ENCODE measurements at regions of chr5 and their contacts with region 1.

Region 1: DNA sequence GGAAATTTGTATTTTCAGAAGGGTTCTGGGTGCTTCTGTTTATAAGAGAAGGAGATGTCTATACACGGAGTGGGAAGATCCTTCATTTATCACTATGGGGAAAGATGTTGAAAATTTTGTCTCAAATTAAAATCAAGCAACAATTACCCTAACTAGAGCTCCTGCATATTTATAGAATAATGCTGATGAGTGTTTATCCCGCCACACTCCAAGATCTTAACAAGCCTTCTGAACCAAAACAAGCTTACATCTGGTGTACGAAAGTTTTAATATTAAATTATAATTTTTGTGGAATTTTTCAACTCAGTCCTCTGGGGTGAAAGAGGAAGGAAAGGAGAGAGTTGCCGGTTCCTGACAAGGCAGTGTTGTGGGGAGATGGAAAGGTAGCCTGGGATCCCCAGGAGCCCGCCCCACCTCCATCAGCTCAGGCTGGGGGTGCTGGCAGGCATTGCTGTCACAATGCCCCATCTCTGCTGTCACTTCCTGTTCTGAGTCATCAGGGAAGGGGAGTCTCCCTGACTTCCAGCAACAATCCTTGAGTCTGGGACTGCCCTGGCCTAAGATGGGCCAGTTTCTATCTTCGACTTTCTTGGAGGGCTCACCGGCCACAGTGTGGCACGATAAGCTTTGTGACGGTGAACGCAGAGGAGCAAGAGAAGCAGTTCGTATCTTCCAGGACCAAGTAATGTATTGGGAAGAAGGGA is 64.5 kb downstream of the ERAP1 start:
- DNase-seq: no peak
- H3K4me3 ChIP-seq: no peak overlapping the region
- CTCF ChIP-seq: no peak

Region 2: DNA sequence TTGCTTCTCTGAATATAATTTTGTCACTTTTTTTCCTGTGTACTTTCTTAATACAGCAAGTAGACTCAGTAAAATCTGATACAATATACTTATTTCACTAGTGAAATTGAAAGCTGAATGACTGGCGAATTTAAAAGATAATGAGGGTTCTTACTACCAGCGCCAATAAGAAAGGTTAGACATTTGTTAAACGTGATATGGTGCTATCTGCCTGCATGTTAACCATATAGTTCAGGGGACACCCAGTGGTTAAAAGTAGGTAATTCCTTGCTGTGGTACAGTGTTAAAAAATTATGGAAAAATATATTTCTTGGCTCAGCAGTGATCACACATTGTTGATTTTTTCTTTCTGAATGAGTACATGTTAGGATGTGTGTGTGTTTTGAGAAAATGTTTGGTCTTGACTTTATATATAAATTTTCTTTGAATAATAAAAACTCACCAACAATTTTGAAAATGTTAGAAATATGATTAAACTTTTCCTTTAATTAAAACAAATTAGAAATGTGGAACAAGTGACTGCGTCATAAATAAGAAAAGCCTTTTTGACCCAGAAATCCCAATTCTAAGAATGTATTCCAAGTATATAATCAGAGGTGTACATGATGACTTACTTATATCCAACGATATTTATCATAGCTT is 55.3 kb before region 1 on chr5:
- in situ Hi-C with region 1: loop called (anchors 10 kb)
- DNase-seq: peak; percentile 56
- H3K4me3 ChIP-seq: no peak overlapping the region
- CTCF ChIP-seq: peak; percentile 56